ENCODE measurements at regions of chr10 and their contacts with region 1.

Region 1: DNA sequence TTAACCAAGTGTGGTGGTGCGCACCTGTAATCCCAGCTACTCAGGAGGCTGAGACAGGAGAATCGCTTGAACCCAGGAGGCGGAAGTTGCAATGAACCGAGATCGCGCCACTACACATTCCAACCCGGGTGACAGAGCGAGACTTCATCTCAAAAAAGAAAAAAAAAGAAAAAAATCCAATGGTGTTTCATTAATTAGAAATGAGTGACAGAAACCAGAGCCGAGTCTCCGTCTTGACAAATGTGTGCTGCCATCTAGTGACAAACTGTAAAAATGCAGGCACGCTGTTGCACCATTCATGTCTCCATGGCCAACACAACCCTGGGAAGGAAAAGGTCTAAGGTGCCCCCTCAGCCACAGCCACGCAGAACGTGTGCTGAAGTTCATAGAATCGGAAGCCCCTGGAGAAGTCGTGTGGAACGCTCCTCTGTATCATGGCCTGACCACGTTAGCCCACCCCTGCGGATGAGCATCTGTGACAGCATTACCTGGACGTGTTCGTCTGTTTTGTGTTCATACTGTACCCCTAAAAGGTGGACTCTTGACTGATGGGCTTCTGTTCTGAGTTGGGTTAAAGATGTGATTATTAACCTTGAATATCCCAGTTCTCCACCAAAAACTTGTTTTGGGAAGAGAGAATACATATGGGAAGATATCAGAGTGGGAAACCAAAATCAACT is 94.9 kb downstream of the LYZL2 start:
- DNase-seq: peak; percentile 54 to 66
- ATAC-seq: peak; percentile 74 to 93 (median 86)
- H3K4me3 ChIP-seq: no peak overlapping the region
- H3K27ac ChIP-seq: no peak overlapping the region
- H3K4me1 ChIP-seq: no peaks in the 10 kb centered on the region
- H3K27me3 ChIP-seq: peaks cover 0 to 2% (median 0%) of the 10 kb centered on the region in 3 donors
- CTCF ChIP-seq: peak; percentile 95

Region 2: GRCh38 chr10:30392564-30392990 is 142.0 kb before region 1 on chr10:
- intact Hi-C with region 1: loop called (anchors 1 to 5 kb)
- DNase-seq: peak; percentile 68 to 87
- ATAC-seq: peak; percentile 99 to 100 (median 100)
- H3K4me3 ChIP-seq: peak overlapping the region; percentile 40
- H3K27ac ChIP-seq: no peak overlapping the region
- H3K4me1 ChIP-seq: peaks cover 4% of the 10 kb centered on the region
- H3K27me3 ChIP-seq: no peaks in the 10 kb centered on the region
- CTCF ChIP-seq: peak; percentile 95

Region 3: GRCh38 chr10:30413996-30414576 is 120.5 kb before region 1 on chr10:
- intact Hi-C with region 1: loop called (anchors 1 to 5 kb)
- DNase-seq: no peak
- ATAC-seq: peak; percentile 73 to 96 (median 84)
- H3K4me3 ChIP-seq: no peak overlapping the region
- H3K27ac ChIP-seq: no peak overlapping the region
- H3K4me1 ChIP-seq: peaks cover 4% of the 10 kb centered on the region
- H3K27me3 ChIP-seq: no peaks in the 10 kb centered on the region
- CTCF ChIP-seq: peak; percentile 86

Region 4: DNA sequence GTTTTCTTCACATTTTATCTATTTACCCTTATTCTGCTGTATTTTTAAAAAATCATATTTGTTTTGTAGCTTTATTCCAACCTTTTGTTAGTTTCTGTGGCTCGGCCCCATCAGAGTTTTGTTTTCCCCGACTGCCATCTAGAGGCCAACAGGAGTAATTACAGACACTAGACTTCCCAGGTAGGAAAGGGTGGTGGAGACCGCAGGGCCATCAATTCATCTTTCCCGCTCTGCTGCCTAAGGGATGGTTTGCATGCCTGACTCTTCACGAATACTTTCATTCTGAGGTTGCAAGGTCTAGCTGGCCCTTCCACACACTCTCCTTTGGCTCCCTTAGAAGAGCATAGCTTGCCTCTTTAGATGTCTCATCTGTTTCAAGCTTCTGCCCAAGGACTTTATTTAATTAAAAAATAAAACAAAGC is 56.7 kb after region 1 on chr10:
- intact Hi-C with region 1: loop called in 1 of 2 experiments (anchors 5 kb)
- DNase-seq: no peak
- ATAC-seq: peak in 3 of 4 donors; percentile 56 to 71 (median 65)
- H3K4me3 ChIP-seq: no peak overlapping the region
- H3K27ac ChIP-seq: no peak overlapping the region
- H3K4me1 ChIP-seq: no peaks in the 10 kb centered on the region
- H3K27me3 ChIP-seq: no peaks in the 10 kb centered on the region
- CTCF ChIP-seq: peak; percentile 85

Measured in psoas muscle (tissue), 8 donors.